HEK293T (cell line): ENCODE measurements at regions of chr15 and their contacts with region 1.

Region 1: DNA sequence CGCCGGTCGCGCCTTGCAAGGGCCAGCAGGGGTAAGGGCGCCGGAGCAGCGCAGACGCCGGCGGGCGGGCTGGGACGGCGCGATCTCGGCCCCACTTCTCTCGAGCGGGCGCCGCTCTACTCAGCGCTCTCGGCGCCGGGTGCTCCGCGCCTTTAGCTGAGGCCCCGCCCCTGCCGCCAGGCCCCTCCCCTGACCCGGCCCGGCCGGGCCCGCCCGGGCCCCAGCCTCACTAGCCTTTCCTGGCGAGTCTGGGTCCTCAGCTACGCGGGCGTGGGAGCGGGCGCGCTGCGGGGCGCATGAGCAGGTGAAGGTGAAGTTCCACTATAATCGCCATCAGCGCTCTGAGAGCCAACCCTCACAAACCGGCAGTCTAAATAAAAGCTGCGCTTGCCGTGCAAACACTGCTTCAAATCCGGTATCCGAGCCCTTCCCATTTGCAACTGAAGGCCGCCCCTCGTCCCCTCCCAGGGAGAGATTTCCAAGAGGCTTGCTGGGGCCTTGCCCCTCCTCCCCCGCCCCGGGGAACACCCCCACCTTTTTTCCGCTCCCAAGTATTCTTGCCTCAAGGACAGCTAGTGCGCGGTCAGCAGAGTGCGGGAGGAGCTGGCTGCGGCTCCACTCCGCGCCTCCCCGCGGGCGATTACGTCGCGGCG is at the start of gene RPP25:
- DNase-seq: peak; percentile 88

Region 2: GRCh38 chr15:74937596-74938296 is 19.0 kb before region 1 on chr15 and contains the start of gene COX5A:
- CTCF ChIA-PET with region 1: interaction called, 4 read pairs
- POLR2A ChIA-PET with region 1: interaction called, 48 read pairs
- DNase-seq: peak; percentile 95

Region 3: DNA sequence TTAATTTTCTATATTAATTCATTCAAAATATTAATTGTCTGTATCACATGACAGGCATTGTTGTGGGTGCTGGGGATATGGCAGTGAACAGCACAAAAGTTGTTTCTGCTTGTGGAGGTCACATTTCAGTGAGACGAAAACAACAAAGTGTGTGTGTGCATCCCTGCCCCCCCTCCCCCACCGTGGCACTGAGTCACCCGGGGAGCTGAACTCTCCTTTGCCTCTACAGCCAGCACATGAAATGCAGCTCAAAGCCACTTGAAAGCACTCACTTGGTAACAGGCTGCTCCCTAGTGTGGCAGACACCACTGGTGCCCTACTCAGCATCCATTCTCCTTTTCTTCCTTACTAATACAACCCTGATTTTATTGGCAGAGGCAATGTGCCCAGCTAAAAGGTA is 21.7 kb after region 1 on chr15:
- CTCF ChIA-PET with region 1: interaction called, 3 read pairs
- POLR2A ChIA-PET with region 1: interaction called, 12 read pairs
- DNase-seq: no peak

Region 4: GRCh38 chr15:74995241-74995778 is 38.5 kb after region 1 on chr15 and contains the start of gene SCAMP5:
- CTCF ChIA-PET with region 1: no interaction called
- POLR2A ChIA-PET with region 1: interaction called, 41 read pairs
- DNase-seq: peak; percentile 100

Region 5: DNA sequence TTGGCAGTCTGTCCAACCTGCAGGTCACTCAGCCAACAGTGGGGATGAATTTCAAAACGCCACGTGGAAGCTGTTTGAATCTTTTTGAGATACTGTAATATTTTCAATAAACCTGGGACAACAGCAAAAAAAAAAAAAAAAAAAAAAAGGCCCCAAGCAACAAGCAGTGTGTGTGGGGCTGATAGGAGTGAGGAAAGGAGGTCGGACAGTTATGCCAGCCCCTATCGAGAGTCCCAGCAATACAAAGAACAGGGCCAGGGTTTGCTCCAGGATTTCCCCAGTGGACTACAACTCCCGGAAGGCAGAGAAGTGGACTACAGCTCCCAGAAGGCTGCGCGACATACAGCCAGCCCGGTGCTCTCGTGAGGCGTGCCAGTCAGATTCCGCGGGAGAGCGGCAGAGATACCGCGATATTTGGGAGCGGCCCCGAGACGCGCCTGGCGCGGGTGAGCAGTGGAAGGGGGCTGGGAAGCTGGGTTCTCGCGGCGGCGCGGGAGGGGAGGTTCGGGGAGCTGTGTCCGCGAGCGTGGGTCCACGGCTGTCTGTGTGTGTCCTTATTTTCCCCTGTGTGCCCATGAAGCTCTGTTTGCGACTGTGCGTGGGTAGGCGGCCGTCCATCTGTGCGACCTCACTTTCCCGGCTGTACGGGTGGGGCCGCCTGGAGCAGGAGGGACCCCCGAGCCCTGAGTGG is 66.6 kb after region 1 on chr15 and contains the start of gene PPCDC:
- CTCF ChIA-PET with region 1: no interaction called
- POLR2A ChIA-PET with region 1: interaction called, 15 read pairs
- DNase-seq: peak; percentile 100

Region 6: DNA sequence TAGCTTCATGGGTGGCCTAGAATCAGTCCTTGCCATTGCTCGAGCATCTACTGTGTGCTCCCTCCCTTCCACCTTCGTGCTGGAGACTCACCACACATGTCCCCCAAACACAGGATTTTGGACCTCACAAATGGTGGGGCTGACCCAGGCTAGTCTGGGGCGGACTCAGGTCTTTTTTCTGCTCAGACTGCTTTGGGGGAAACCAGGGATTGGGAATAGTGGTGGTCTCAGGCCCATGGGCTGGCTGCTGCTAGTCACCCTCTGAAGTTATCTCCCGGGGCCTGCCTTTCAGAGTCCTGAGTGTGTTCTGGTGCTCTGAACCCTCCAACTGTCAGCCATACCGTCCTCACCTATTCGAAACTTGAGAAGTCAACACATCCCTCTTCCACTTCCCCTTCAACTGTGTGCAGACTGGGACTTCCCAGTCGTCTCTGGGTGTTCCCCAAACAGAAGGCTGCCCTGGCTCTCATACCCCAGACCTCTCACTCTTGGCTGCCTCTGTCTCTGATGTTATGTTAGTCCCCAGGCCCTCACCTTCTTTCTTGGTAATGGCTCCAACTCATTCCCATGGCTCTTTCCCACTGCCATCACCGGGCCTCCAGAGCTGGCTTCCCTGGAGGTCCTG is 112.6 kb after region 1 on chr15:
- CTCF ChIA-PET with region 1: no interaction called
- POLR2A ChIA-PET with region 1: no interaction called
- DNase-seq: no peak